CD14-positive monocyte (primary cell): ENCODE measurements at regions of chr22 and their contacts with region 1.

Region 1: GRCh38 chr22:30634471-30635233 is 929 bp upstream of the SLC35E4 start:
- DNase-seq: peak; percentile 90 to 97 (median 95)
- H3K4me3 ChIP-seq: peak overlapping the region; percentile 29 to 79 (median 55)
- H3K4me3 Mint-ChIP-seq: peak overlapping the region; percentile 70 to 86
- H3K27ac ChIP-seq: peak overlapping the region; percentile 92
- H3K27ac Mint-ChIP-seq: peak overlapping the region; percentile 92 to 98 (median 93)
- H3K4me1 ChIP-seq: peaks cover 28 to 33% of the 10 kb centered on the region in 2 donors
- H3K4me1 Mint-ChIP-seq: peaks cover 21% of the 10 kb centered on the region
- H3K27me3 ChIP-seq: peaks cover 0 to 6% of the 10 kb centered on the region in 2 donors
- H3K27me3 Mint-ChIP-seq: peaks cover 4 to 11% (median 5%) of the 10 kb centered on the region in 3 donors
- CTCF ChIP-seq: peak; percentile 94

Region 2: DNA sequence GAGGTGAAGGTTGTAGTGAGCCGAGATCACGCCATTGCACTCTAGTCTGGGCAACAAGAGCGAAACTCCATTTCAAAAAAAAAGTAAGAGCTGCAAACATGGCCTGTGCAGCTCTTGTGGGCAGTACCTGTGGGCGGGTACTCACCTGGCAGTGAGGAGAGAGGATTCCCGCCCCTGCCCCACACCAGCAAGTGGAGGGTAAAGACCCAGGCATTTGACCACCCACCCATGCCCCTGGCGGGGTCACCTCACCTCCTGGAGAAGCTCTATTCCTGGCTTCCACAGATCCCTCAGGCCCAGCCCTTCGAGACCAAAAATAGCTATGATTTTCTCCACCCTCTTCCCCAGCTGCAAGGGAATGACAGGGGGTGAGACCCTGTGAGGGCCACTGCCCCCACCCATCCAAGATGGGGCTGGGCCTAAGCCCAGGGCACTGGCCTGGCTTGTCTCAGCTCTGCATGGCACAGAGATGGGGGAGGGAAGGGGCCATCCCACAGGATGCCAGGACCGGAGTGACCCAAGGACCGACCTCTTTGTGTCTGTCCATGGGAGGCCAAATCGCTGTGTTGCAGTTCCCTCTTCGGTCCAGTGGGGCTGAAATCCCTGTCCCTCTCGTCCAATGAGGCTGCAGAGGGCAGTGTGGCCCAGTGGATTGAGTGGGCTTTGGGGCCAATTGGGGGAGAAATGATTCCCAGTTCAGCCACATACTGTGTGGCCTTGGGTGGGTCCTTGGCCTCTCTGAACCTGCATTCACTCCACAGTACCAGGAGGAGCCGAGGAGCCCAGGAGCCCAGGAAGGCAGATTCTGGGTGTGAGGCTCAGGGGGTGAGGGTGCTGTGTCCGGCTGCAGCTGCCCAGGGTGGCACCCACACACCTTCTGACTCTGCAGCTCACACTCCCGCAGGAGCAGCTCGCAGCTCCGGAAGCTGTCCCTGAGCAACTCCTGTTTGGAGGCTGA is 102.7 kb before region 1 on chr22:
- intact Hi-C with region 1: no loop called
- DNase-seq: no peak
- H3K4me3 ChIP-seq: no peak overlapping the region
- H3K4me3 Mint-ChIP-seq: no peak overlapping the region
- H3K27ac ChIP-seq: no peak overlapping the region
- H3K27ac Mint-ChIP-seq: no peak overlapping the region
- H3K4me1 ChIP-seq: no peaks in the 10 kb centered on the region
- H3K4me1 Mint-ChIP-seq: no peaks in the 10 kb centered on the region
- H3K27me3 ChIP-seq: no peaks in the 10 kb centered on the region
- H3K27me3 Mint-ChIP-seq: peaks cover 2 to 5% (median 5%) of the 10 kb centered on the region in 3 donors
- CTCF ChIP-seq: no peak

Region 3: DNA sequence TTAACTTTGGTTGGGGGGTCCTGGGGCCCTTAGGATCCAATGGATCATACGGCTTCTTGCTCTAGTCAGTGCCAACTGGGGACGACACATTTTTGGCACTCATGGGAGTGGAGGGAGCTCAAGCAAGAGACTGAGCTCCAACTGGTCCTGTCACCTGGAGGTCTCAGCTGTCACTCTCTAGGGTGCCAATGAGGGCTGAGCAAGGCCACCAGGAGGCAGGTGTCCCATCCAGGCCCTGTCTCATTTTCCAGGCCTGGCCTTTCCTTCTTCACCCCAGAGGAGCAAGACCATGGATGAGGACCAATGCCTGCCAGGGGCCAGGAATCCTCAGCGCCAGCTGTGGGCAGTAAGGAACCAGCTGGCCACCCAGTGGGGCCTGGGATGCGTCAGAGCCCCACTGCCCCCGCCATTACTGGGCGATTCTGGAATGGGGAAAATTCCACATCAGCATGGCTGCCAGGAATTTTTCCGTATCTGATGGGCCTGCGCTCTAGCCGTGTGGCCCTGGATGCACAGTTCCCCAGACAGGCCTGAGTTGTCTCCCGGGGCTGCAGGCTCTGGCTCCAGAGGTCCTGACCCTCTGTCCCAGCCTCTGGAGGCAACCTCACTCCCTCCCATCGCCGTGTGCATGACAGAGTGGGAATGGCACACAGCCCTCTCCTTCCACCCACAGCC is 59.5 kb before region 1 on chr22:
- intact Hi-C with region 1: no loop called
- DNase-seq: no peak
- H3K4me3 ChIP-seq: no peak overlapping the region
- H3K4me3 Mint-ChIP-seq: peak overlapping the region in 1 of 2 donors; percentile 73
- H3K27ac ChIP-seq: no peak overlapping the region
- H3K27ac Mint-ChIP-seq: no peak overlapping the region
- H3K4me1 ChIP-seq: no peaks in the 10 kb centered on the region
- H3K4me1 Mint-ChIP-seq: peaks cover 4% of the 10 kb centered on the region
- H3K27me3 ChIP-seq: peaks cover 0 to 20% of the 10 kb centered on the region in 2 donors
- H3K27me3 Mint-ChIP-seq: peaks cover 20 to 24% (median 23%) of the 10 kb centered on the region in 3 donors
- CTCF ChIP-seq: no peak

Region 4: DNA sequence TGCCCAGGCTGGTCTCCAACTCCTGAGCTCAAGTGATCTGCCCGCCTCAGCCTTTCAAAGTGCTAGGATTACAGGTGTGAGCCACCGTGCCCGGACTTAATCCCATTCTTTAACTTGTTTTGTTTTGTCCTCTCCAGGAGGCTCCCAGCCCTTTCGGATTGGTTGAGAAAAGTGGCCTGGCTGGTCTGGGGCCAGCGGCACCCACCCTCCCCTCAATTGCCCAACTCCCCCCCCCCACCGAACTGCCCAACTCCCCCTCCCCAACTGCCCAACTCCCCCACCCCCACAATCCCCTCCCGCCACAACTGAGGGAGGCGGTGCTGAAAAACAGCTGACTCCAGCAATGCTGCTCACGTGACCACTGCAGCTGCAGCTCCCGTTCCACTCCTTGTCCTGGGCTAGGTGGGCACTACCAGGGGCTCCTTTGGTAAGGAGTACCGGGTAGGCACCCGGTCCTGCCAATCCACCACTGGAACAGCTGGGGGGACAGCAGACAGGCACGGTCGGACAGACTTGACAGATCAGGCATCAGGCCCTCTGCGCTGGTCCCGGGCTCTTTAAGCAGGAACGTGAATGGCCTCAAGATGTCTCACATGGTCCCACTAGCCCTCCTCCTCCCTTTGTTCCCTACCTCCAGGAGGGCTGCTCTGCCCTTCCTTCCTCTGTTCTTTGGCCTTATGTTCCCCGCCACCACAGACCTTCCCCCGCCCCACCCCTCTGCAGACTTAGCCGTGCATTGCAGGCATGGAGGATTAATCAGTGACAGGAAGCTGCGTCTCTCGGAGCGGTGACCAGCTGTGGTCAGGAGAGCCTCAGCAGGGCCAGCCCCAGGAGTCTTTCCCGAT is 28.0 kb before region 1 on chr22 and contains the start of gene TCN2:
- intact Hi-C with region 1: loop called in 1 of 2 experiments (anchors 2 kb)
- DNase-seq: peak; percentile 85 to 92 (median 87)
- H3K4me3 ChIP-seq: peak within 1 kb of the TSS; percentile 43 to 80 (median 48)
- H3K4me3 Mint-ChIP-seq: peak within 1 kb of the TSS; percentile 84 to 93
- H3K27ac ChIP-seq: peak within 1 kb of the TSS; percentile 90 to 97
- H3K27ac Mint-ChIP-seq: peak within 1 kb of the TSS; percentile 95 to 100 (median 99)
- H3K4me1 ChIP-seq: peaks cover 61 to 66% of the 10 kb centered on the region in 2 donors
- H3K4me1 Mint-ChIP-seq: peaks cover 64% of the 10 kb centered on the region
- H3K27me3 ChIP-seq: no peaks in the 10 kb centered on the region
- H3K27me3 Mint-ChIP-seq: no peaks in the 10 kb centered on the region
- CTCF ChIP-seq: no peak
- polyA plus RNA-seq, gene TCN2: 27.1 to 51.7 (median 45.0) TPM

Region 5: GRCh38 chr22:30649430-30650007 is 14.9 kb after region 1 on chr22:
- intact Hi-C with region 1: loop called in 1 of 2 experiments (anchors 2 kb)
- DNase-seq: peak; percentile 88 to 96 (median 95)
- H3K4me3 ChIP-seq: no peak overlapping the region
- H3K4me3 Mint-ChIP-seq: no peak overlapping the region
- H3K27ac ChIP-seq: peak overlapping the region in 1 of 2 donors; percentile 54
- H3K27ac Mint-ChIP-seq: peak overlapping the region; percentile 43 to 82 (median 57)
- H3K4me1 ChIP-seq: peaks cover 14 to 21% of the 10 kb centered on the region in 2 donors
- H3K4me1 Mint-ChIP-seq: peaks cover 21% of the 10 kb centered on the region
- H3K27me3 ChIP-seq: no peaks in the 10 kb centered on the region
- H3K27me3 Mint-ChIP-seq: no peaks in the 10 kb centered on the region
- CTCF ChIP-seq: peak; percentile 30

Region 6: GRCh38 chr22:30667494-30668385 is 33.1 kb after region 1 on chr22 and contains the start of gene DUSP18:
- intact Hi-C with region 1: loop called in 1 of 2 experiments (anchors 1 kb)
- DNase-seq: peak; percentile 90 to 92 (median 90)
- H3K4me3 ChIP-seq: peak within 1 kb of the TSS; percentile 80 to 93 (median 92)
- H3K4me3 Mint-ChIP-seq: peak within 1 kb of the TSS; percentile 91 to 97
- H3K27ac ChIP-seq: peak within 1 kb of the TSS; percentile 43 to 88
- H3K27ac Mint-ChIP-seq: peak within 1 kb of the TSS; percentile 77 to 94 (median 91)
- H3K4me1 ChIP-seq: peaks cover 19 to 26% of the 10 kb centered on the region in 2 donors
- H3K4me1 Mint-ChIP-seq: peaks cover 25% of the 10 kb centered on the region
- H3K27me3 ChIP-seq: peaks cover 6 to 11% of the 10 kb centered on the region in 2 donors
- H3K27me3 Mint-ChIP-seq: peaks cover 12 to 23% (median 17%) of the 10 kb centered on the region in 3 donors
- CTCF ChIP-seq: peak; percentile 65
- polyA plus RNA-seq, gene DUSP18: 13.2 to 34.5 (median 18.9) TPM

Region 7: GRCh38 chr22:30754971-30755756 is 120.5 kb after region 1 on chr22:
- intact Hi-C with region 1: loop called in 1 of 2 experiments (anchors 2 kb)
- DNase-seq: peak in 2 of 3 donors; percentile 16 to 33
- H3K4me3 ChIP-seq: no peak overlapping the region
- H3K4me3 Mint-ChIP-seq: no peak overlapping the region
- H3K27ac ChIP-seq: no peak overlapping the region
- H3K27ac Mint-ChIP-seq: no peak overlapping the region
- H3K4me1 ChIP-seq: no peaks in the 10 kb centered on the region
- H3K4me1 Mint-ChIP-seq: no peaks in the 10 kb centered on the region
- H3K27me3 ChIP-seq: no peaks in the 10 kb centered on the region
- H3K27me3 Mint-ChIP-seq: peaks cover 5 to 12% (median 10%) of the 10 kb centered on the region in 3 donors
- CTCF ChIP-seq: peak; percentile 36